ENCODE measurements at regions of chr1 and their contacts with region 1.

Region 1: GRCh38 chr1:167776151-167776550 is 54.4 kb downstream of the MPZL1 start:
- DNase-seq: no peak
- H3K4me3 Mint-ChIP-seq: peak overlapping the region; percentile 23
- H3K27ac Mint-ChIP-seq: peak overlapping the region; percentile 38
- H3K4me1 Mint-ChIP-seq: peaks cover 46% of the 10 kb centered on the region
- H3K27me3 Mint-ChIP-seq: no peaks in the 10 kb centered on the region

Region 2: DNA sequence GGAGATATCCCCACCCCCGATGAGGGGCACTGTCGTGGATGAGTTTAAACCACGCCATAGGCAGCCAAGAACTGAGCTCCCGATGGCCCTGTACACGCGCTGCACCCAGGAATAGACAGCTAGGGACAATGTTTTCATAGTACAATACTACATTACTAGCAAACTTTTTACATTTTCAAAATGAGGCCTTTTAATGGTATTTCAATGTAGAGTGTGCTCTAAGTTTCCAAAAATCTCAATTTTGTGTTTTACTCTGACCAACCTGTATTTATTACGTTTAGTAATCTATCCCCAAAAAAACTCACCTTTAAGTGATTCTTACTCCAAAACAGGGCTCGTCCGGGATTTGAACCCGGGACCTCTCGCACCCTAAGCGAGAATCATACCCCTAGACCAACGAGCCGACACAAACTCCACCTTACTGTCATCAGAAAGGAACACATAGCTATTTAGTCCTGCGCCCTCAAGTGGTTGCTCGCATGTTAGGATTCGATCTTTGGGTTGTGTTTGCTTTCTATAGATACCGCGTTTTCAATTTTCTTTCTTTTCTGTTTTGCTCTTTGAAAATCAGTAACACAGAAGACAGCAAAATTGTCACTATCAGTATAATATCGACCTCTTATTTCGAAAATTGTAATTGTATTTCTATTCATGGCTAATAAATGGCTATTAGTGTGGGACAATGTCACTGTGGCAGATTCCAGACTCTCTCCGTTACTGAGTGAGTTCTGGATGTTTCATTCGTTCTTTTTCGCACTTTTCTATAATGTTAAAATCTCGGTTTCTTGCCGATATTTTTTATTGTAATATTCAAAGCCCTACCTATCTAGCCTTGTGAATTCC is 60.8 kb before region 1 on chr1:
- intact Hi-C with region 1: loop called (anchors 2 kb)
- DNase-seq: peak; percentile 84
- H3K4me3 Mint-ChIP-seq: peak overlapping the region; percentile 96
- H3K27ac Mint-ChIP-seq: peak overlapping the region; percentile 91
- H3K4me1 Mint-ChIP-seq: peaks cover 61% of the 10 kb centered on the region
- H3K27me3 Mint-ChIP-seq: peaks cover 21% of the 10 kb centered on the region